MCF 10A (cell line): ENCODE measurements at regions of chr10 and their contacts with region 1.

Region 1: GRCh38 chr10:47311932-47312662 is 10.2 kb upstream of the GDF2 start:
- DNase-seq: peak; percentile 72
- H3K4me3 Mint-ChIP-seq: no peak overlapping the region
- H3K27ac Mint-ChIP-seq: no peak overlapping the region
- H3K4me1 Mint-ChIP-seq: no peaks in the 10 kb centered on the region
- H3K27me3 Mint-ChIP-seq: peaks cover 28% of the 10 kb centered on the region
- CTCF ChIP-seq: peak; percentile 97

Region 2: GRCh38 chr10:47031211-47031900 is 280.7 kb before region 1 on chr10:
- CTCF ChIA-PET with region 1: interaction called, 131 read pairs
- POLR2A ChIA-PET with region 1: no interaction called
- intact Hi-C with region 1: no loop called
- DNase-seq: peak; percentile 12
- H3K4me3 Mint-ChIP-seq: no peak overlapping the region
- H3K27ac Mint-ChIP-seq: no peak overlapping the region
- H3K4me1 Mint-ChIP-seq: peaks cover 8% of the 10 kb centered on the region
- H3K27me3 Mint-ChIP-seq: peaks cover 13% of the 10 kb centered on the region
- CTCF ChIP-seq: no peak

Region 3: GRCh38 chr10:47047671-47048525 is 264.2 kb before region 1 on chr10:
- CTCF ChIA-PET with region 1: interaction called, 233 read pairs
- POLR2A ChIA-PET with region 1: interaction called, 9 read pairs
- intact Hi-C with region 1: loop called (anchors 1 kb)
- DNase-seq: peak; percentile 74
- H3K4me3 Mint-ChIP-seq: no peak overlapping the region
- H3K27ac Mint-ChIP-seq: peak overlapping the region; percentile 55
- H3K4me1 Mint-ChIP-seq: no peaks in the 10 kb centered on the region
- H3K27me3 Mint-ChIP-seq: peaks cover 12% of the 10 kb centered on the region
- CTCF ChIP-seq: peak; percentile 94

Region 4: GRCh38 chr10:47055386-47056246 is 256.5 kb before region 1 on chr10:
- CTCF ChIA-PET with region 1: interaction called, 14 read pairs
- POLR2A ChIA-PET with region 1: no interaction called
- intact Hi-C with region 1: no loop called
- DNase-seq: no peak
- H3K4me3 Mint-ChIP-seq: no peak overlapping the region
- H3K27ac Mint-ChIP-seq: no peak overlapping the region
- H3K4me1 Mint-ChIP-seq: no peaks in the 10 kb centered on the region
- H3K27me3 Mint-ChIP-seq: peaks cover 43% of the 10 kb centered on the region
- CTCF ChIP-seq: no peak

Region 5: GRCh38 chr10:47214520-47214919 is 97.6 kb before region 1 on chr10:
- CTCF ChIA-PET with region 1: no interaction called
- POLR2A ChIA-PET with region 1: no interaction called
- intact Hi-C with region 1: no loop called
- DNase-seq: no peak
- H3K4me3 Mint-ChIP-seq: no peak overlapping the region
- H3K27ac Mint-ChIP-seq: no peak overlapping the region
- H3K4me1 Mint-ChIP-seq: no peaks in the 10 kb centered on the region
- H3K27me3 Mint-ChIP-seq: no peaks in the 10 kb centered on the region
- CTCF ChIP-seq: no peak

Region 6: DNA sequence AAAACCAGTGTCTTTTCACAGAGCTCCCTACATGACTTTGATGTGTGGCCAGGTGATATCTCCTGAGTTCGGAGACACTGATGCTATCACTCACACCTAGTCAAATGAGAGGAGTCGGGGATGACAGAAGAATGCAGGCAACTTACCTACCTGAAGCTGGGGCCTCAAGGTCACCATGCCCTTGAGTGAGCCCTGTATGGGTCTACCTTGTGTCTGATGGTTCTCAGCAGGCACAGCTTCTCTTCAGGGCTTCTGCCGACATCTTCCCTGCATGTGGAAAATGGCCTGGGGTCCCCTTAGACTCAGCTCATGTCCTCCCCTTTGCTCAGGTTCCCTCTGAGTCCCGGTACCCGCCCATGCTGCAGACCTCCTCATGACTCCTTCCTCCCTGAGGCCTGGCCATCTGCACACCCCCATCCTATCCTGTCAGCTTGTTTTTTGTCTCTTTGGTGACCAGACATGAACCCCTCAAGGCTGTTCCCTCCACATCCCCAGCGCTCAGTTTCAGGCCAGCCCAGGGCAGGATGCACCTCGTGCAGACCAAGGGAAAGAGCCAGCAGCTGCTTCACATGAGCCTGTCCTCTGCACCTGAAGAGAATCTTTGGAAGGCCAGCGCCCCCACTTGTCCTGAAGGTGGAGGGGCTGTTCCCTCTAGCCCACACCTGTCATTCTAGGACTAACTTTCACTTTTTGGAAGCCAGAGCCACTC is 86.7 kb before region 1 on chr10:
- CTCF ChIA-PET with region 1: no interaction called
- POLR2A ChIA-PET with region 1: no interaction called
- intact Hi-C with region 1: no loop called
- DNase-seq: no peak
- H3K4me3 Mint-ChIP-seq: no peak overlapping the region
- H3K27ac Mint-ChIP-seq: no peak overlapping the region
- H3K4me1 Mint-ChIP-seq: no peaks in the 10 kb centered on the region
- H3K27me3 Mint-ChIP-seq: peaks cover 11% of the 10 kb centered on the region
- CTCF ChIP-seq: no peak

Region 7: DNA sequence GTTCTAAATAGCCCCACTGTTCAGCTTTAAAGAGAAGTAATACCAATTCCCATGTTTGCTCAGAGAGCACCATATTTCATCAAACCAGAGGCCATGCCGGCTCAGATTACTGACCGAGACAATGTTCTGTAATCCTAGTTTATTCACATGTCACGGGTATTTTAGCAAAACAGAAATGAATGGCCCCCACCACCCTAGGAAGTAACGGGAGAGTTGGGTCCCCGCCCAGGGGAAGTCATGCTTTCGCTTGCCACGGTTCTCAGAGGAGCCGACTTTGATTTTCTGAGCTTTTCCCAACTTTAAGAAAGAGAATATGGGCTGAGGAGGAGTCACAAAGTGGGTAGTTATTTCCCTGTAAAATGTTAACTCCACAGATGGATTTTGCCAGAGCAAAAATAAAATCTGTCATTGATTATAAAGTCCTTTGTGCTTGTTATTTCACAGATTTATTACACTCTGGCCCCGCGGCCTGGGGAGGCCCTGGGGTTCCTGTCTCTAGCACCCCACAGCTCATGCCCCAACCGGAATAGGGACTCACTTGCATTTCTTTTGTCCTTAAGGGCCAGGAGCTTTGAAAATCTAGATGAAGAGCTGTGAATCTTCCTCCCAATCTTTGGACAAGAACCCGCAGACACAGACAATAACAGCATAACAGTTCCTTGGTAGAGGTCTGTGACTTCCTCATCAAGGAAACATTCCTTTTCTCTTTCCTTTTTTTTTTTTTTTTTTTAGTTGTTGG is 15.8 kb before region 1 on chr10:
- CTCF ChIA-PET with region 1: interaction called, 12 read pairs
- POLR2A ChIA-PET with region 1: no interaction called
- intact Hi-C with region 1: no loop called
- DNase-seq: no peak
- H3K4me3 Mint-ChIP-seq: no peak overlapping the region
- H3K27ac Mint-ChIP-seq: no peak overlapping the region
- H3K4me1 Mint-ChIP-seq: no peaks in the 10 kb centered on the region
- H3K27me3 Mint-ChIP-seq: peaks cover 49% of the 10 kb centered on the region
- CTCF ChIP-seq: no peak